ENCODE measurements at regions of chr11 and their contacts with region 1.

Region 1: DNA sequence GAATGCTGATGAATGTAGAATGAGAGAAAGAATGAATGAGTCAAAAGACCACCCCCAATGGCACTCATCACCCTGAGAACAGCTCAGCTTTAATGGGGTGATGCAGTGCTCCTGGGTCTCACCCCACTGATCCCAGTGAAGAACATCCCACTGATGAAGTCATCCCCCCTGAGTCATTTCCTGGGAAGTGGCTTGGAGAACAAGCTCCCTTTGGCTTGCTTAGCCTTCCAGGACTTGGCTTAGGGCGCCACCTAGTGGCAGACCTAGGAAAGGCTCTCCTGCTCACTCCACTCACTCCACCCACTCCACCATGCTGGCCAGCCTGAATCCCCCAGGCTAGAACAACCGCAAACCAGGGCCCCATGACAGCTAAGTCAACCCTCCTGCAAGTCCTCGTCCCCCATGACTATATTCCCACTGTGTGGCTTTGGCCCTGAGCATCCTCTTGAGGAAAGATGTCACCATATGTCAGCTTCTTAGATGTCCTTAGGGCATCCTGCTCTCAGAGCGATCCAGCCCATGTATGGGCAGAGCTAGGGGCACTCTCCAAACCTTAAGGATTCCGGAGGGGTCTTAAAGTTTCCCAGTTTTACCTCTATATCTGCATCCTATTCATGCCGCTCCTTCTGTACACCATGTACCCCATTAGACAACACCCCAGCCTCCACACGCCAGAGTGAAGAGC is 17.8 kb upstream of the TMPRSS13 start:
- DNase-seq: peak; percentile 66 to 90 (median 79)
- ATAC-seq: no peak
- H3K4me3 ChIP-seq: no peak overlapping the region
- H3K4me3 Mint-ChIP-seq: peak overlapping the region; percentile 67
- H3K27ac ChIP-seq: no peak overlapping the region
- H3K27ac Mint-ChIP-seq: peak overlapping the region; percentile 86
- H3K4me1 ChIP-seq: peaks cover 69% of the 10 kb centered on the region
- H3K4me1 Mint-ChIP-seq: peaks cover 71% of the 10 kb centered on the region
- H3K27me3 ChIP-seq: no peaks in the 10 kb centered on the region
- H3K27me3 Mint-ChIP-seq: no peaks in the 10 kb centered on the region
- CTCF ChIP-seq: peak; percentile 88

Region 2: DNA sequence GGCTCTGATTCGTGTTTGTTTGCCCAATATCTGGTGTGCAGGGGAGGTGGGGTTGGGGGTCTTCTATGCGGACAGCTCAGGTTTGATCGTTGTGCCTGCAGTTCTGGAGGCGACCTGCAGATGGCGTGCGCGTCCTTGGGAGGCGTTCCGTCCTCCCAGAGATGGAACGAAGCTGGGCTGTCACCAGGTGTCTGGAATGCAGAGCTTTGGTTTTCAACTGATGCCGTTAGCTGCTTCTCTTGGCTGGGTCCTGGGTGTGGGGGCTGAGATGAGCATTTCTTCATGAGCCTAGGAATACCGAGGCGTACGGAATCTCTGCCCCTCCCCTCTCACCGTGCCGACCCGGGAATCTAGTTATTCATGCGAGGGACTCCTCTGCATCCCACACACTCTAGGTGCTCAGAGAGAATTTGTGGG is 520.7 kb before region 1 on chr11:
- CTCF ChIA-PET with region 1: no interaction called
- POLR2A ChIA-PET with region 1: no interaction called
- intact Hi-C with region 1: loop called in 1 of 2 experiments (anchors 5 kb)
- DNase-seq: peak; percentile 50 to 74 (median 61)
- ATAC-seq: peak; percentile 48
- H3K4me3 ChIP-seq: no peak overlapping the region
- H3K4me3 Mint-ChIP-seq: no peak overlapping the region
- H3K27ac ChIP-seq: no peak overlapping the region
- H3K27ac Mint-ChIP-seq: no peak overlapping the region
- H3K4me1 ChIP-seq: peaks cover 8% of the 10 kb centered on the region
- H3K4me1 Mint-ChIP-seq: peaks cover 5% of the 10 kb centered on the region
- H3K27me3 ChIP-seq: no peaks in the 10 kb centered on the region
- H3K27me3 Mint-ChIP-seq: no peaks in the 10 kb centered on the region
- CTCF ChIP-seq: peak; percentile 92

Region 3: DNA sequence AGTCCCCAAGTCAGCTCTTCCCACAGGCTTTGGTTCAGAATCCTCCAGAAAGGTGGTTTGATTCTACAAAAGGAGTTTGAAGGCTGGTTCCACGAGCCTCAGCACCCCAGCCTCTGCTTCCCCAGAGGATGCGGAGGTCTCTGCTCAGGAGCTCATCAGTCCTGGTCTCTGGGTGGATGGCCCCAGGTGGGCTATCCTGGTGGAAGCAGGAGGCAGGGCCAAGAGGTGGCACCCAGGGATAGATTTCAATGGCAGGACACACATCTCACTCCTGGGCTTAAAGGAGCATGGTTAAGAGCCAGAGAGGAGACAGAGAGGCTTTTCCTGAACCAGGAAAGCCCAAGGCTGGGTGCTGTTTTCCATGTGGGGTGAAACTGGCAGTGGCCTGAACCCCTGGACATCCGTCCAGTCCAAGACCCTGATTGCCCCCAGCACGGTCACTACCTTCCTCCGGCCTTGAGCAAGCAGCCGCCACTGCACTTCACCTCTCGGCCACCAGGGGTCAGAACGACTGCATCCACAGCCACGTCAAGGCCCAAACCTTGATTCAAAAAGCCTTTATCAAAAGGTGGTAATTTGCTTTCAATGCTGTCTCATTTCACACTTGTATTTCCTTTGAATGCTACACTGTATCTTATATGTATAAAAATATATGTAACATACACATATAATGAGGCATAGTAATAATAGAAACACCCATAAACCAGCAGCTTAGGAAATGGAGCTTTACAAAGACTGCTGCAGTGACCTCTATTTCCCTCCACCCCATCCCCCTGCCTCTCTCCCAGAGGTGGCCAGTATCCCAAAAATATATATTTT is 103.1 kb before region 1 on chr11:
- CTCF ChIA-PET with region 1: interaction called, 26 read pairs
- POLR2A ChIA-PET with region 1: interaction called, 3 read pairs
- intact Hi-C with region 1: loop called (anchors 1 kb)
- DNase-seq: peak; percentile 67 to 91 (median 82)
- ATAC-seq: peak; percentile 91
- H3K4me3 ChIP-seq: no peak overlapping the region
- H3K4me3 Mint-ChIP-seq: no peak overlapping the region
- H3K27ac ChIP-seq: no peak overlapping the region
- H3K27ac Mint-ChIP-seq: no peak overlapping the region
- H3K4me1 ChIP-seq: peaks cover 18% of the 10 kb centered on the region
- H3K4me1 Mint-ChIP-seq: no peaks in the 10 kb centered on the region
- H3K27me3 ChIP-seq: no peaks in the 10 kb centered on the region
- H3K27me3 Mint-ChIP-seq: no peaks in the 10 kb centered on the region
- CTCF ChIP-seq: peak; percentile 98

Region 4: DNA sequence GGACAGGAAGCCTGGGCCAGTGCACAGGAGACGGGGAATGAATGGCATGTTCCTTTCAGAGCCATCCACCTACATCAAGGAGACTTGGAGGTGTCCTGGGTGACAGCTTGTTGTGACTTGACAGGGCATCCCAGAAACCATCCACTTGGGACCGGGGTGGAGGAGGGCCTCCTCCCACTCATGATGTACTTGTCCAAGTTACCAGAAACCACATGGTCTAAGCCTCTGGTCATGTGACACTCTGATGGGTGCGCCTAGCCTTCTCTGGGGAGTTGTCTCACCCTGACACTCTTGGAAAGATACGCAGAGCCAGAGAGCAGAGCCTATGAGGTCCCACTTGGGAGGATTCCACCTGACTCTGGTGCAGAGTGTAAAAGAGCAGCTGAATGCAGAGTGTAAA is 48.9 kb before region 1 on chr11:
- CTCF ChIA-PET with region 1: no interaction called
- POLR2A ChIA-PET with region 1: no interaction called
- intact Hi-C with region 1: no loop called
- DNase-seq: peak in 1 of 14 experiments; percentile 23
- ATAC-seq: no peak
- H3K4me3 ChIP-seq: no peak overlapping the region
- H3K4me3 Mint-ChIP-seq: no peak overlapping the region
- H3K27ac ChIP-seq: no peak overlapping the region
- H3K27ac Mint-ChIP-seq: no peak overlapping the region
- H3K4me1 ChIP-seq: peaks cover 6% of the 10 kb centered on the region
- H3K4me1 Mint-ChIP-seq: no peaks in the 10 kb centered on the region
- H3K27me3 ChIP-seq: peaks cover 0 to 5% of the 10 kb centered on the region in 2 experiments
- H3K27me3 Mint-ChIP-seq: no peaks in the 10 kb centered on the region
- CTCF ChIP-seq: no peak

Region 5: DNA sequence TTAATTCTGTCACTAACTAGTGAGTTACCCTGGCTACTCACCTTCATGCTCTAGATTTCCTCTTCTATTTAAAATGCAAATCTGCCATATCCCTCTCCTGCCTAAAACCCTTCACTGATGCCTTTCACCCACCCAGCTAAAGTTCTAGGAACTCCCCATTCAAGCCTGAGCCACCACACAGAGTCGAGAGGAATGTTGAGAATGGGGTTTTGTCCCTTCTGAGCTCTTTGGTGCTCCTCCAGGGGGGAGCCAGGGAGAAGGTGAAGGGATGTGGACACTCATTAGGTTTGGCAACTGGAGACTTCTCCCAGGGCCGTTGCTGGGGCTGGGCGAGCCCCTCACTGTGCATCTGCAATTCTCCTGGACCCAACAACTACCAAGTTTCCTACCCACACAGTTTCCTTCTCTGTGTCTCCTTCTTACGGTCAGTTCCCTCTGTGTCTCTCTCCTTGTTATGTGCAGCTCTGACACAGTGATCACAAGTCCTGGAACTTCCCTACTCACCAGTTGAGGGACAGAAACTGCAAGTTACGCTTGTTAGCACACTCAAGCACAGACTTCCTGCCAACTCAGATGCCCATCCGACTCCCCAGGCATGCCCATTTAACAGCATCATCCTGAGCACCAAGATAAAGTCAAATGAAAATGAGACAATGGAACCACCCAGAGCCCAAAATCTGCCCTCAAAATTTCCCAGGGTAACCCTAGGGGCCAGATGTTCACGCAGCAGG is 32.7 kb after region 1 on chr11:
- CTCF ChIA-PET with region 1: interaction called, 37 read pairs
- POLR2A ChIA-PET with region 1: interaction called, 240 read pairs
- intact Hi-C with region 1: no loop called
- DNase-seq: peak in 3 of 14 experiments; percentile 57 to 76 (median 68)
- ATAC-seq: peak; percentile 62
- H3K4me3 ChIP-seq: no peak overlapping the region
- H3K4me3 Mint-ChIP-seq: peak overlapping the region; percentile 40
- H3K27ac ChIP-seq: no peak overlapping the region
- H3K27ac Mint-ChIP-seq: peak overlapping the region; percentile 3
- H3K4me1 ChIP-seq: peaks cover 66% of the 10 kb centered on the region
- H3K4me1 Mint-ChIP-seq: peaks cover 80% of the 10 kb centered on the region
- H3K27me3 ChIP-seq: no peaks in the 10 kb centered on the region
- H3K27me3 Mint-ChIP-seq: no peaks in the 10 kb centered on the region
- CTCF ChIP-seq: no peak

Region 6: DNA sequence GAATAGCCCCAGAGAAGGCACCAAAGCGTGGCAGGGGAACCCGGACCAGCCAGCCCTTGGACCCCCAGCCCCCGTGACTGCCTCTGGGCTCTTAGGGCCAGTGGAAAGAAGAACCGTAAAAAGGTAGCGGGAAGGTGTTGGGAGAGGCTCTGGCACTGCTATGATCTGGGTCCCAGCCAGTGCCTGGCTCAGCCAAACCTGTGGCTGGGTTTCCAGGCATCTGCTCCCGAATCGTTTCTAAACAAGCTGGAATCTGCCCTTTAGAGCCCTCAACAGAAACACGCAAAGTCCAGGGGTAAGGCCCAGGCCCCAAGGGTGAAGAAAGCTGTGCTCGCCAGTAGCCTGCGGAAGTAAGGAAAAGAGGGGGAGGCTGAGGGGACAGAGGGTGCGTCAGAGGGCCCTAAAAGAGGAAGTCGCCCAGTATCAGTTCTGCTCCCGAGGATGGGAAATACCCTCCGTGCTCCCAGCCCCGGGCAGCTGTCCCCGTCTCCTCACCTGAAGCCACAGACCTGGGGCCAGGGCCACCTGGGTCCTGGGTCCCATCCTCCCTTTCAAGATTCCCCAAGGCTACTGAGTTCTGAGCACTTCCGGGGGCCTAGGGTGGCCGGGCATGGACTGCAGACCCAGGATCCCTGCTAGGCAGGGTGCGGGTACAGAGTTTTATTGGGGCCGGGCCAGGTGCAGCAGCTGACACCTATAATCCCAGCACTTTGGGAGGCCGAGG is 63.9 kb after region 1 on chr11:
- CTCF ChIA-PET with region 1: interaction called, 6 read pairs
- POLR2A ChIA-PET with region 1: interaction called, 273 read pairs
- intact Hi-C with region 1: no loop called
- DNase-seq: peak in 3 of 14 experiments; percentile 48 to 76 (median 67)
- ATAC-seq: no peak
- H3K4me3 ChIP-seq: no peak overlapping the region
- H3K4me3 Mint-ChIP-seq: no peak overlapping the region
- H3K27ac ChIP-seq: peak overlapping the region; percentile 9 to 79
- H3K27ac Mint-ChIP-seq: peak overlapping the region; percentile 83
- H3K4me1 ChIP-seq: peaks cover 99% of the 10 kb centered on the region
- H3K4me1 Mint-ChIP-seq: peaks cover 95% of the 10 kb centered on the region
- H3K27me3 ChIP-seq: no peaks in the 10 kb centered on the region
- H3K27me3 Mint-ChIP-seq: no peaks in the 10 kb centered on the region
- CTCF ChIP-seq: no peak

Region 7: GRCh38 chr11:118051611-118052461 is 104.9 kb after region 1 on chr11:
- CTCF ChIA-PET with region 1: interaction called, 78 read pairs
- POLR2A ChIA-PET with region 1: interaction called, 156 read pairs
- intact Hi-C with region 1: loop called (anchors 1 kb)
- DNase-seq: peak; percentile 63 to 94 (median 74)
- ATAC-seq: peak; percentile 95
- H3K4me3 ChIP-seq: no peak overlapping the region
- H3K4me3 Mint-ChIP-seq: peak overlapping the region; percentile 81
- H3K27ac ChIP-seq: peak overlapping the region; percentile 48 to 68
- H3K27ac Mint-ChIP-seq: peak overlapping the region; percentile 95
- H3K4me1 ChIP-seq: peaks cover 66% of the 10 kb centered on the region
- H3K4me1 Mint-ChIP-seq: peaks cover 65% of the 10 kb centered on the region
- H3K27me3 ChIP-seq: no peaks in the 10 kb centered on the region
- H3K27me3 Mint-ChIP-seq: no peaks in the 10 kb centered on the region
- CTCF ChIP-seq: no peak